AG04450 (cell line): ENCODE measurements at regions of chr17 and their contacts with region 1.

Region 1: DNA sequence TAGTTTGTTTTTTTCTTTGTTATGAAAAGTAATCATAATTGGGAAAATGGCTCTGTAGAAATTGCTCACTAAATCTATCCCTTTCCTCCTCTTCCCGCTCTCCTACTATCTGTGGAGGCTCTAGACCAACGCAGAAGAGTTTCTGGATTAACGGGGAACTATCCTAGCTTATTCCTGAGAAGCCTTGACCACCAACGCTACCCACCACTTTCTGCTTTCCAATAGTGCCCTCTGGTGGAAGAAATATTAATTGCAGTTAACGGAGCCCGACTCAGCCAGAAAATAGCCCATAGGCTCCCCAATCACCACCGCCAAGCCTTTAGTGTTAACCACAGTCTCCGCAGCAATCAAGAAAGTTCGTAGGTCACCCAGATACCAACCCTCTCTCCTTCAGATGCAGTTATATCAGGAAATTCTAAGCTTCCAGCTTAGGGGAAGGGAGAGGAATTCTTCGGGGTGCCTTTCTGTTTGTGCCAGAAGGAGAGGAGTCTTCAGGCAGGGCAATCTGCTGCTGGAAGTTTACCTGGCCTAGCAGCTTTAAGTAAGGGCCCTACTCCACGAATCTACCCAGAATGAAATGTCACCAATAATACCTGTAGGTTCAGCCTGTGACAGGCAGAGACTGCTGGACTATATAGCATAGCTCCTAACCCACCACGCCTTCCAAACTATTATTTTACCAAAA is 23.0 kb upstream of the NSRP1 start:
- DNase-seq: no peak
- H3K4me3 ChIP-seq: no peak overlapping the region
- H3K27ac ChIP-seq: no peak overlapping the region
- H3K27me3 ChIP-seq: peaks cover 3% of the 10 kb centered on the region
- CTCF ChIP-seq: peak; percentile 71

Region 2: DNA sequence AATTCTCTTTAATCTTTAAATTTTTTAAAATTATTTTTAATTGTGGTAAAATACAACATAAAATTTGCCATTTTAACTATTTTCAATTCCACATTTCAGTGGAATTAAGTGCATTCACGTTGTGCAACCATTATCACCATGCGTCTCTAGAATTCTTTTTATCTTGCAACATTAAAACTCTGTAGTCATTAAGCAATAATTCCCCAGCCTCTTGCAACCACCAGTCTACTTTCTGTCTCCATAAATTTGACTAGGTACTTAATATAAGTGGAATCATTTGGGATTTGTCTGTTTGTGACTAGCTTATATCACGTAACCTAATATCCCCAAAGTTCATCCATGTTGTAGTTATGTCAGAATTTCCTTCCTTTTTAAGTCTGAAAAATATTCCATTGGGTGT is 624.3 kb before region 1 on chr17:
- CTCF ChIA-PET with region 1: no interaction called
- POLR2A ChIA-PET with region 1: no interaction called
- DNase-seq: no peak
- H3K4me3 ChIP-seq: no peak overlapping the region
- H3K27ac ChIP-seq: no peak overlapping the region
- H3K27me3 ChIP-seq: no peaks in the 10 kb centered on the region
- CTCF ChIP-seq: no peak

Region 3: DNA sequence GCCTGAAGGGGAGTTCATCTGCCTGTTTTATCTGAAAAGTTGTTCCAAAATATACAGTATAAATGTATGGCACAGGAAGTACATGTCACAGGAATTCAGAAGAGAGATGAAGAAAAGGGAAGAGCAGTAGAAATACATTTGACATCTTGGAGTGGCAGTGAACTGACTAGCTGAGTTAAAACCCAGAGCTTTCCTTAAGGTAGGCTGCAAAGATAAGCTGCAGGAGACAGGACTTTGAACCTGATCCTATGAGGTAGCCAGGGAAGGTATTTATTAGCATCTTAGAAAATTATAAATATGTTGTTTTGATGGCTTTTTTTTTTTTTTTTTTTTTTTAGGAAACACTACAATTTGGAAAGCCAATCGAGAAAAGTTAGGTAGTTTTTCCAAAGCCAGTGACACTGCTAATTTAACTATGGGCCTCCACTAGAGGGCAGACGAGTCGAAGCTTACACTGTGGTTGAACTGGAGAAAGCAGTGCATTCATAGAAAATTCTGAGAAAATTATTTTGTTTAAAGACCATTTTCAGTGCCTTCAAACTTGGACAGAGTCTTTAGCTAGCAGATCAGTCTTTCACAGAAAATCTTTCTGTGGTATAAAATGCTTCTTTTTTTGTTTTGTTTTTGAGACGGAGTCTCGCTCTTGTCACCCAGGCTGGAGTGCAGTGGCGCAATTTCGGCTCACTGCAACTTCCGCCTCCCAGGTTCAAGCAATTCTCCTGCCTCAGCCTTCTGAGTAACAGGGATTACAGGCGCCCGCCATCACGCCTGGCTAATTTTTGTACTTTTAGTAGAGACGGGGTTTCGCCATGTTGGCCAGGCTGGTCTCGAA is 285.9 kb before region 1 on chr17:
- CTCF ChIA-PET with region 1: interaction called, 136 read pairs
- POLR2A ChIA-PET with region 1: no interaction called
- DNase-seq: peak; percentile 42
- H3K4me3 ChIP-seq: no peak overlapping the region
- H3K27ac ChIP-seq: peak overlapping the region; percentile 54
- H3K27me3 ChIP-seq: no peaks in the 10 kb centered on the region
- CTCF ChIP-seq: peak; percentile 74

Region 4: GRCh38 chr17:30021708-30022317 is 71.8 kb before region 1 on chr17:
- CTCF ChIA-PET with region 1: interaction called, 118 read pairs
- POLR2A ChIA-PET with region 1: no interaction called
- DNase-seq: peak; percentile 13
- H3K4me3 ChIP-seq: no peak overlapping the region
- H3K27ac ChIP-seq: no peak overlapping the region
- H3K27me3 ChIP-seq: no peaks in the 10 kb centered on the region
- CTCF ChIP-seq: peak; percentile 87

Region 5: GRCh38 chr17:30041551-30041950 is 52.1 kb before region 1 on chr17:
- CTCF ChIA-PET with region 1: interaction called, 16 read pairs
- POLR2A ChIA-PET with region 1: no interaction called
- DNase-seq: no peak
- H3K4me3 ChIP-seq: no peak overlapping the region
- H3K27ac ChIP-seq: no peak overlapping the region
- H3K27me3 ChIP-seq: peaks cover 6% of the 10 kb centered on the region
- CTCF ChIP-seq: no peak

Region 6: DNA sequence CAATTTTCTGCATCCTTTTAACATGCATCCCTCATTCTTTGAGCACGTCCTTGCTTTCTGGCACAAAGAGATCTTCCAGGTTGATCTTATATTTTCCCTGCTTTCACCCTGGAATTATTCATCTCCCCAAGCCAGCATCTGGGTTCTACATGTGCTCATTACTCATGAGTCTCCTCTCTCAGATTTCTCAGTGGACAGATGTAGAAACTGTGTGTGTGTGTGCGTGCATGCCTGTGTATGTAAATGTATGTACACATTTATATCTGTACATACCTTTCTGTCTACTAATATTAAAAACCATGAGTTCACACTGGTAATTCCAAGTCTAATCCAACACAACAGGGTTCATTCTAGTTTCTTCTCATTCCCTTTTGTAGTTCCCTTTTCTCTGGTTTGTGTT is 18.9 kb before region 1 on chr17:
- CTCF ChIA-PET with region 1: interaction called, 63 read pairs
- POLR2A ChIA-PET with region 1: no interaction called
- DNase-seq: no peak
- H3K4me3 ChIP-seq: no peak overlapping the region
- H3K27ac ChIP-seq: no peak overlapping the region
- H3K27me3 ChIP-seq: peaks cover 18% of the 10 kb centered on the region
- CTCF ChIP-seq: no peak

Region 7: DNA sequence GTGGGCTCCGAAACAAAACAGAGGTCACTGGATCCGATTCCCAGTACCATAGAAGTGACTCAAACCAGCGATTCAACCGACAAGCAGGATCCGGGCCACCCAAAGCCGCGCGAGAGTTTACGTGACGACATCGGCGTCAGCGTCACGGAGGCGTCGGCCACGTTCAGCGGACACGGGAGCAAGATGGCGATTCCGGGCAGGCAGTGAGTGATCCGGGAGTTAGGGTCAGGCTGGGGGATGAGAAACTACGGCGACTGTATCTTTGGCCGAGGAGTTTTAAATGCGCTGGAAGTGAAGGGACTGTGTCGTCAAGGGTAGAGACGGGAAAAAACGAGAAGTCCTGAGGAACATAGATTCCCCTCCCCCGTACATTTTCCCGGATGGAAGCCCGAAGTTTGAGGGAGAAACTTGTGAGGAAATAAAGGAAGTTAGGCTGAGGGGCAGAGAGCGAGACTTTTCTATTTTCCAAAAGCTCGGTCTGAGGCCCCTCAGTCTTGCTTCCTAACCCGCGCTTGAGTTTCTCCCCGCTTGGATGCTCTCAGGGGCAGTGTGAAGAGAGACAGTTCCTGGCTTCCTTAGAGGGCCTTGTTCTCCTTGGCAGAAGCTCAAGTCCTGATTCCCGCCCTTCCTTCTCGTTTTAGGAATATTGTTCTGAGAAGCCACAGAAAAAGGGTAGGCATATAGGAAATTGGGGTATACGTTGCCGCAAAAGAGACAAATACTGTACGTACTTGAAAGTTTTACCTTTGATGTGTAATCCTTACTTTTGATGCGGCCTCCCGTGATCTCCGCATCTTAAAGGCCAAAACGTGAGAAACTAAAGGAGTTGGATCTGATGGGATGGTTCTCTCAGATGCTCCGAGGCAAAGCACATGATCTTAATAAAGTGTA is 23.3 kb after region 1 on chr17 and contains the start of gene NSRP1:
- CTCF ChIA-PET with region 1: interaction called, 22 read pairs
- POLR2A ChIA-PET with region 1: no interaction called
- DNase-seq: peak; percentile 83
- H3K4me3 ChIP-seq: peak within 1 kb of the TSS; percentile 87
- H3K27ac ChIP-seq: peak within 1 kb of the TSS; percentile 97
- H3K27me3 ChIP-seq: no peaks in the 10 kb centered on the region
- CTCF ChIP-seq: no peak
- polyA plus RNA-seq, gene NSRP1: 14.8 and 18.6 TPM in 2 replicates